ENCODE measurements at regions of chr7 and their contacts with region 1.

Region 1: DNA sequence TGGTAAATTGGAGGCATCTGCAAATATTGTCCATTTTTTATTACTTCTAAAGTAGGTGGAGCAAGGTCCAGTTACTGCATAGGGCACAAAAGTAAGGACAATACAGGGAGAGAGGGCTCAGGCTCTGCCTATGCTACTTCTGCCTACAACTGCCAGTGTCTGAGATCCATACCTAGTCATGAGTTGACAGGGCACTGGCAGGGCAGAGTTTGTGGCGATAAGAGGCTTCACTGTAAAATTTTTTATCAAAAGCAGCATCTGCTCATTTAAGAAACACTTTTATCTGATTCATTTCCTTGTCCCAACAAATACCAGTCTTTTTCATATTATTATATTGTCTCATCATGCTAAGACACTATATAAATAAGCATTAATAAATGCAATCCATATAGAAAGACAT is 178.0 kb downstream of the LRRN3 start:
- DNase-seq: no peak
- H3K4me3 ChIP-seq: no peak overlapping the region
- H3K27ac ChIP-seq: no peak overlapping the region
- H3K4me1 ChIP-seq: peaks cover 0 to 6% (median 0%) of the 10 kb centered on the region in 4 donors
- H3K27me3 ChIP-seq: no peaks in the 10 kb centered on the region
- CTCF ChIP-seq: no peak
- EP300 ChIP-seq: no peak
- POLR2A ChIP-seq: no peak

Region 2: DNA sequence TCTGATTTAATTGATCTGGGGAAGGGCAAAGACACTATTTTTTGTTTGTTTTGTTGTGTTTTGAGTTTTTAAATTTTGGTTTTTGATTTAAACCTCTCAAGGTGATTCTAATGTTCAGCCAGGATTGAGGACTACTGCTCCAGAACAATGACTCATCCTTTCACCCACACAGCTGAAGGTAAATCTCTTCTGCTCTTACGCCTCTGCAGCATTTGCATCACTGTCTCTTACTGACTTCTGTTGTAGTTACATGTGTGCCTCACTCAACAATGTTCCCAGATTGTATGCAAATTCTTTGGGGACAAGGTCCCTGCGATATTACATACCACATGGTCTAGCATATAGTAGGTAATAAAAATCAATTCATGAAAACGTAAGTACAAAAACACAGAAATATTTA is 645.5 kb before region 1 on chr7:
- intact Hi-C with region 1: no loop called
- DNase-seq: no peak
- H3K4me3 ChIP-seq: no peak overlapping the region
- H3K27ac ChIP-seq: no peak overlapping the region
- H3K4me1 ChIP-seq: no peaks in the 10 kb centered on the region
- H3K27me3 ChIP-seq: no peaks in the 10 kb centered on the region
- CTCF ChIP-seq: no peak
- EP300 ChIP-seq: no peak
- POLR2A ChIP-seq: no peak

Region 3: GRCh38 chr7:111059833-111060232 is 209.1 kb before region 1 on chr7:
- intact Hi-C with region 1: no loop called
- DNase-seq: no peak
- H3K4me3 ChIP-seq: no peak overlapping the region
- H3K27ac ChIP-seq: no peak overlapping the region
- H3K4me1 ChIP-seq: no peaks in the 10 kb centered on the region
- H3K27me3 ChIP-seq: no peaks in the 10 kb centered on the region
- CTCF ChIP-seq: no peak
- EP300 ChIP-seq: no peak
- POLR2A ChIP-seq: no peak

Region 4: DNA sequence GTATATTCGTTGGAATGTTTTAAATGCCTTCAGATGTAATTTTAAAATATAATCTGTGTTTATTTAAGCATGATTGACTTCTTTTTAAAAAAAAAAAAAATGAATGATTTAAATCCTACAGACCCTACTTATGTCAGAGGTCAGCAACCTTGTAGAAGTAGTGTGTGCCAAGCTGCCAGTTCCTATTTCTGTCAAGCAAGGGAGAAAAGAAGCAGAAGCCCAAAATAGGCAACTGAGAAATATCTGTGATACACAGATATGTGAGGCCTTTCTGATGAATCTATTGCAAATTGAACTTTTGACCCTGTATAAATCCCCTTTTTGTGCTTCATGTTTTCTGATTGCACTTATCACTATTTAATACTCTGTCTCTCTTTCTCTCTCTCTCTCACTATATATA is 21.5 kb after region 1 on chr7:
- intact Hi-C with region 1: loop called (anchors 2 kb)
- DNase-seq: no peak
- H3K4me3 ChIP-seq: no peak overlapping the region
- H3K27ac ChIP-seq: no peak overlapping the region
- H3K4me1 ChIP-seq: peaks cover 0 to 6% (median 4%) of the 10 kb centered on the region in 4 donors
- H3K27me3 ChIP-seq: no peaks in the 10 kb centered on the region
- CTCF ChIP-seq: no peak
- EP300 ChIP-seq: no peak
- POLR2A ChIP-seq: no peak